ENCODE measurements at regions of chr7 and their contacts with region 1.

Region 1: GRCh38 chr7:108629651-108630400 is 60.2 kb downstream of the DNAJB9 start:
- DNase-seq: peak; percentile 7 to 35
- ATAC-seq: peak in 6 of 8 donors; percentile 53 to 79 (median 62)
- H3K4me3 ChIP-seq: no peak overlapping the region
- H3K27ac ChIP-seq: peak overlapping the region in 1 of 10 donors; percentile 52
- H3K4me1 ChIP-seq: peaks cover 0 to 16% (median 8%) of the 10 kb centered on the region in 9 donors
- H3K27me3 ChIP-seq: peaks cover 0 to 4% (median 0%) of the 10 kb centered on the region in 7 donors
- CTCF ChIP-seq: no peak

Region 2: GRCh38 chr7:108211382-108212201 is 418.2 kb before region 1 on chr7:
- intact Hi-C with region 1: no loop called
- DNase-seq: no peak
- ATAC-seq: no peak
- H3K4me3 ChIP-seq: no peak overlapping the region
- H3K27ac ChIP-seq: no peak overlapping the region
- H3K4me1 ChIP-seq: no peaks in the 10 kb centered on the region
- H3K27me3 ChIP-seq: no peaks in the 10 kb centered on the region
- CTCF ChIP-seq: no peak

Region 3: GRCh38 chr7:108557191-108557590 is 72.6 kb before region 1 on chr7:
- intact Hi-C with region 1: no loop called
- DNase-seq: no peak
- ATAC-seq: no peak
- H3K4me3 ChIP-seq: no peak overlapping the region
- H3K27ac ChIP-seq: no peak overlapping the region
- H3K4me1 ChIP-seq: peaks cover 0 to 6% (median 0%) of the 10 kb centered on the region in 9 donors
- H3K27me3 ChIP-seq: no peaks in the 10 kb centered on the region
- CTCF ChIP-seq: no peak

Region 4: DNA sequence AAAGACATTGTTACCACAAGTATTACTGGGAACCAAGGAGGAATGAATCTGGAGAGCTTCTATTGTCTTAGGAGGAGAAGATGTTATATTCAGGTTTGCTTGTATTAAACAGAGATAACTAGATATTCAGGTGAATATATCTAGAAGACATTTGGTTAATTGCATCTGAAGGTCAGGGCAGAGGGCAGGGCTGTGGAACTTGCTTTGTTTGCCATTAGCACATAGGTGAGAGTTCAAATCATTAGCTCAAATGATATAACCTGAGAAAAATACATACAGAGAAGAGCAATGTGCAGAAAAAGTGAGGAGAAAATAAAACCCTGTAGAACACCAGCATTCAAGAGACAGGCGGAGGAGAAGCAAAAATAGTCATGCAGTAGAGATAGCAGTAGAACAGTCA is 56.7 kb after region 1 on chr7:
- intact Hi-C with region 1: no loop called
- DNase-seq: no peak
- ATAC-seq: no peak
- H3K4me3 ChIP-seq: no peak overlapping the region
- H3K27ac ChIP-seq: no peak overlapping the region
- H3K4me1 ChIP-seq: no peaks in the 10 kb centered on the region
- H3K27me3 ChIP-seq: no peaks in the 10 kb centered on the region
- CTCF ChIP-seq: no peak

Region 5: DNA sequence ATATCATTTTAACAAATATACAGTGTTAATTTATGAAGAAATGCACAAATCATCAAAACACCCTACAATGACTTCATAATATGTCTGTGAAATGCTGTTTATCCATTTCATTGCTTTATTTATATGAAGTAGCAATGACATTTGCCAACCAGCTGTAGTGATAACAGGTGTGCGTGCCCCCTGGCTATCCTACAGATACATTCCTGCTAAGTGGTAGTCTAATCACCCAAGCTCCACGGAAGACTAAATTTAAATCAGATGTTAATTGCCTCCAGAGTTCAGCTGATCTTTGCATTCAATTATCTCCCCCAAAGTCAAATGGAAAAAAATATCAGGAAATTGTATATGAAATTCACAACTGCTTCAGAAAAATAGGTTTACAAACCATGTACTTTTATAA is 1296.9 kb after region 1 on chr7:
- intact Hi-C with region 1: loop called in 1 of 10 experiments (anchors 10 kb)
- DNase-seq: no peak
- ATAC-seq: no peak
- H3K4me3 ChIP-seq: no peak overlapping the region
- H3K27ac ChIP-seq: no peak overlapping the region
- H3K4me1 ChIP-seq: no peaks in the 10 kb centered on the region
- H3K27me3 ChIP-seq: no peaks in the 10 kb centered on the region
- CTCF ChIP-seq: no peak

Measured in heart right ventricle (tissue), 16 donors.